Pancreas (tissue), 10 donors: ENCODE measurements at regions of chr19 and their contacts with region 1.

Region 1: DNA sequence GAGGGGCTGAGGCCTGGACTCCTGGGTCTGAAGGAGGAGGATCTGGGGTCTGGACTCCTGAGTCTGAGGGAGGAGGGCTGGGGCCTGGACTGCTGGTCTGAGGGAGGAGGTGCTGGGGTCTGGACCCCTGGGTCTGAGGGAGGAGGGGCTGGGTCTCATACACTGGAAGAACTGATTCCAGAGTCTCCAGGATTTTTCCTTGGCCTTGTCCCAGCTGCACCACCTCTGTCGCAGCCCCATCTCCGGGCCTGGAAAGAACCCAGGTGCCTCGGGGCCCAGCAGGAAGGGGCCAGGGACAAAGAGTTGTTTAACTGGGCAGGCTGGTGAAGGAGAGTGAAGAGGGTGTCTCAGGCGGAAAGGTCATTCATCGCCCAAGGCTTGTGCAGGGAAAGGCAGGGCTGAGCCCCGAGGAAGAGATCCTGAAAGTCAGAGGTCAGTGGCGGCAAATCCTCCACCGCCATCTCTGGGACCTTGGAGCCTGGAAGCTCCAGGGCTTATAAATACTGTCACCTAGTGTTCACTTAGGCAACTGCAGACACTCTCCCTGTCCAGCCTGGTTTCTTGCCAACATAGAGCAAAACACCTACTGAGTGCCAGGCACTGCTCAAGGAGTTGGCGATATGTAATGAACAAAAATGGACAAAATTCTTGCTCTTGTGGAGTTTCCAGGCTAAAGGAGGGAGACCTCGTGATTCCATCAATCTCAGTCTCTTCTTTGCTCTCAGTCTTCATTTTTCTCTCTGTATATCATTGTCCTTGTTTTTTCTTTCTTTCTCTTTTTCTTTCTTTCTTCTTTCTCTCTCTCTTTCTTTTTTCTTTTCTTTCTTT is 4.4 kb upstream of the KCNN4 start:
- DNase-seq: peak in 3 of 6 donors; percentile 36 to 63 (median 36)
- ATAC-seq: peak; percentile 74 to 93 (median 86)
- H3K4me3 ChIP-seq: peak overlapping the region in 1 of 4 donors; percentile 9
- H3K27ac ChIP-seq: no peak overlapping the region
- H3K4me1 ChIP-seq: no peaks in the 10 kb centered on the region
- H3K27me3 ChIP-seq: no peaks in the 10 kb centered on the region
- CTCF ChIP-seq: peak; percentile 64 to 96 (median 92)

Region 2: GRCh38 chr19:43372462-43372861 is 412.7 kb before region 1 on chr19:
- intact Hi-C with region 1: no loop called
- DNase-seq: no peak
- ATAC-seq: no peak
- H3K4me3 ChIP-seq: no peak overlapping the region
- H3K27ac ChIP-seq: no peak overlapping the region
- H3K4me1 ChIP-seq: no peaks in the 10 kb centered on the region
- H3K27me3 ChIP-seq: no peaks in the 10 kb centered on the region
- CTCF ChIP-seq: no peak

Region 3: GRCh38 chr19:43452582-43452981 is 332.6 kb before region 1 on chr19:
- intact Hi-C with region 1: no loop called
- DNase-seq: no peak
- ATAC-seq: no peak
- H3K4me3 ChIP-seq: no peak overlapping the region
- H3K27ac ChIP-seq: no peak overlapping the region
- H3K4me1 ChIP-seq: no peaks in the 10 kb centered on the region
- H3K27me3 ChIP-seq: no peaks in the 10 kb centered on the region
- CTCF ChIP-seq: no peak

Region 4: GRCh38 chr19:43595999-43596841 is 189.0 kb before region 1 on chr19 and contains the starts of genes IRGQ and ZNF576:
- intact Hi-C with region 1: no loop called
- DNase-seq: peak; percentile 99 to 100 (median 100)
- ATAC-seq: peak; percentile 88 to 93 (median 91)
- H3K4me3 ChIP-seq: peak within 1 kb of the TSS; percentile 53 to 60 (median 54)
- H3K27ac ChIP-seq: peak within 1 kb of the TSS; percentile 96 to 99 (median 98)
- H3K4me1 ChIP-seq: peaks cover 6 to 21% (median 17%) of the 10 kb centered on the region in 3 donors
- H3K27me3 ChIP-seq: no peaks in the 10 kb centered on the region
- CTCF ChIP-seq: no peak
- total RNA-seq, gene IRGQ: 8.2 to 14.7 (median 11.0) TPM
- total RNA-seq, gene ZNF576: 5.2 to 8.6 (median 6.2) TPM

Region 5: GRCh38 chr19:43743022-43743421 is 42.2 kb before region 1 on chr19:
- intact Hi-C with region 1: loop called in 2 of 3 experiments (anchors 5 kb)
- DNase-seq: no peak
- ATAC-seq: no peak
- H3K4me3 ChIP-seq: no peak overlapping the region
- H3K27ac ChIP-seq: no peak overlapping the region
- H3K4me1 ChIP-seq: no peaks in the 10 kb centered on the region
- H3K27me3 ChIP-seq: no peaks in the 10 kb centered on the region
- CTCF ChIP-seq: no peak